ENCODE measurements at regions of chr1 and their contacts with region 1.

Region 1: DNA sequence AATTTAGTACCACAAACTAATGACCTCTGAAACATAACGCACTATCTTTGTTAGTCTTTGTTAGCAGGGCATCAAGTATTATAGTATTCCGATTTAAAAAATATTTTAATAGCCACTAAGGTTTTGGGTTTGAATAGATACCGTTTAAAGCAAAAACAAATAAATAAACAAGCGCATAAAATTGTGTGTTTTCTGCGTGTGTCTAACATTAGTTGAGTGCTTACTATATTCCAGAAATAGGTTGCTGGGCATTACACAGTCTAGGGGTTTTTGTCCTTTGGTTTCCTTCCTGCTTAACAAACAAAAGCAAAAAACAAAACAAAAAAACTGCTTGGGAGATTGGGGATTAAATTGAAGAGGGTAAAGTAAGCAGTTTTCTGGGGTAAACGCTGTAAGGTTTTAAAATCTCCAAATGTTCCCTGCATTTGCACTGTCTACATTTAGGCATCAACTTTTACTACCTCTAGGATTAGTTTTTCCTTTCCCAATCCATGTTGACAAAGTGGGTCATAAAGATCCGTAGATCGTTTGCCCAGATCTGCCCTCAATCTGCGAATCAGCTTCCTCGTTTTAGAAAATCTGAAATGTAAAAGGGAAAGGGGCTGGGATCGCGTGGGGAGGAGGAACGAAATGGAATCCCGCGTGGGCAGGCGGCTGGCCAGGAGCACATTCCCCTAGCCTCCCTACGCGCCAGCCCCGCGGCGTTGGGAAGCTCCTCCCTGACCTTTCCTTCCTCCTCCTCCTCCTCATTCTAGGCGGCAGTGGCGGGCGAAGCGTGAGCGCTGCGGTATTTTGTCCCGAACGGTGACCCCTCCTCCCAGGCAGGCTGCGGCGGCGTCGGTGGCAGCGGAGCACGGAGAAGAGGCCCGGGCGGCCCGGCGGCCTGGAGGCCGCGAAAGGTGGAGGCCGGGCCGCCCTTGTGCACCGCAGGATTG is at the start of gene KCTD3:
- DNase-seq: peak; percentile 89
- ATAC-seq: peak; percentile 33
- H3K4me3 ChIP-seq: peak within 1 kb of the TSS; percentile 81
- H3K27ac ChIP-seq: peak within 1 kb of the TSS; percentile 88
- H3K4me1 ChIP-seq: peaks cover 35% of the 10 kb centered on the region
- H3K27me3 ChIP-seq: no peaks in the 10 kb centered on the region
- CTCF ChIP-seq: no peak
- total RNA-seq, gene KCTD3: 48.4 and 52.8 TPM in 2 replicates

Region 2: GRCh38 chr1:215192306-215192705 is 374.5 kb before region 1 on chr1:
- CTCF ChIA-PET with region 1: no interaction called
- POLR2A ChIA-PET with region 1: no interaction called
- intact Hi-C with region 1: loop called (anchors 2 kb)
- DNase-seq: peak; percentile 85
- ATAC-seq: peak; percentile 60
- H3K4me3 ChIP-seq: no peak overlapping the region
- H3K27ac ChIP-seq: peak overlapping the region; percentile 16
- H3K4me1 ChIP-seq: peaks cover 38% of the 10 kb centered on the region
- H3K27me3 ChIP-seq: no peaks in the 10 kb centered on the region
- CTCF ChIP-seq: no peak

Region 3: GRCh38 chr1:215589650-215590049 is 22.8 kb after region 1 on chr1:
- CTCF ChIA-PET with region 1: no interaction called
- POLR2A ChIA-PET with region 1: no interaction called
- intact Hi-C with region 1: loop called (anchors 2 kb)
- DNase-seq: peak; percentile 73
- ATAC-seq: peak; percentile 41
- H3K4me3 ChIP-seq: no peak overlapping the region
- H3K27ac ChIP-seq: peak overlapping the region; percentile 9
- H3K4me1 ChIP-seq: peaks cover 23% of the 10 kb centered on the region
- H3K27me3 ChIP-seq: no peaks in the 10 kb centered on the region
- CTCF ChIP-seq: no peak

Region 4: GRCh38 chr1:215606564-215607168 is 39.8 kb after region 1 on chr1:
- CTCF ChIA-PET with region 1: no interaction called
- POLR2A ChIA-PET with region 1: interaction called, 4 read pairs
- intact Hi-C with region 1: loop called (anchors 1 kb)
- DNase-seq: peak; percentile 75
- ATAC-seq: peak; percentile 78
- H3K4me3 ChIP-seq: no peak overlapping the region
- H3K27ac ChIP-seq: no peak overlapping the region
- H3K4me1 ChIP-seq: no peaks in the 10 kb centered on the region
- H3K27me3 ChIP-seq: no peaks in the 10 kb centered on the region
- CTCF ChIP-seq: peak; percentile 95

Region 5: GRCh38 chr1:215651867-215652266 is 85.0 kb after region 1 on chr1:
- CTCF ChIA-PET with region 1: no interaction called
- POLR2A ChIA-PET with region 1: interaction called, 10 read pairs
- intact Hi-C with region 1: no loop called
- DNase-seq: no peak
- ATAC-seq: no peak
- H3K4me3 ChIP-seq: no peak overlapping the region
- H3K27ac ChIP-seq: no peak overlapping the region
- H3K4me1 ChIP-seq: no peaks in the 10 kb centered on the region
- H3K27me3 ChIP-seq: peaks cover 58% of the 10 kb centered on the region
- CTCF ChIP-seq: no peak

Region 6: GRCh38 chr1:215786997-215787396 is 220.2 kb after region 1 on chr1:
- CTCF ChIA-PET with region 1: no interaction called
- POLR2A ChIA-PET with region 1: interaction called, 3 read pairs
- intact Hi-C with region 1: loop called (anchors 5 kb)
- DNase-seq: peak; percentile 84
- ATAC-seq: peak; percentile 87
- H3K4me3 ChIP-seq: no peak overlapping the region
- H3K27ac ChIP-seq: peak overlapping the region; percentile 4; the same call in 1 of the 2 replicates
- H3K4me1 ChIP-seq: peaks cover 22% of the 10 kb centered on the region
- H3K27me3 ChIP-seq: peaks cover 21% of the 10 kb centered on the region
- CTCF ChIP-seq: no peak